Left cardiac atrium (tissue), 4 donors: ENCODE measurements at regions of chr2 and their contacts with region 1.

Region 1: GRCh38 chr2:168346725-168347477 is 99.5 kb upstream of the STK39 start:
- DNase-seq: peak; percentile 70
- ATAC-seq: peak; percentile 79 to 84

Region 2: GRCh38 chr2:168434146-168434545 is 87.2 kb after region 1 on chr2:
- intact Hi-C with region 1: loop called in 1 of 2 experiments (anchors 10 kb)
- DNase-seq: peak; percentile 33
- ATAC-seq: no peak

Region 3: DNA sequence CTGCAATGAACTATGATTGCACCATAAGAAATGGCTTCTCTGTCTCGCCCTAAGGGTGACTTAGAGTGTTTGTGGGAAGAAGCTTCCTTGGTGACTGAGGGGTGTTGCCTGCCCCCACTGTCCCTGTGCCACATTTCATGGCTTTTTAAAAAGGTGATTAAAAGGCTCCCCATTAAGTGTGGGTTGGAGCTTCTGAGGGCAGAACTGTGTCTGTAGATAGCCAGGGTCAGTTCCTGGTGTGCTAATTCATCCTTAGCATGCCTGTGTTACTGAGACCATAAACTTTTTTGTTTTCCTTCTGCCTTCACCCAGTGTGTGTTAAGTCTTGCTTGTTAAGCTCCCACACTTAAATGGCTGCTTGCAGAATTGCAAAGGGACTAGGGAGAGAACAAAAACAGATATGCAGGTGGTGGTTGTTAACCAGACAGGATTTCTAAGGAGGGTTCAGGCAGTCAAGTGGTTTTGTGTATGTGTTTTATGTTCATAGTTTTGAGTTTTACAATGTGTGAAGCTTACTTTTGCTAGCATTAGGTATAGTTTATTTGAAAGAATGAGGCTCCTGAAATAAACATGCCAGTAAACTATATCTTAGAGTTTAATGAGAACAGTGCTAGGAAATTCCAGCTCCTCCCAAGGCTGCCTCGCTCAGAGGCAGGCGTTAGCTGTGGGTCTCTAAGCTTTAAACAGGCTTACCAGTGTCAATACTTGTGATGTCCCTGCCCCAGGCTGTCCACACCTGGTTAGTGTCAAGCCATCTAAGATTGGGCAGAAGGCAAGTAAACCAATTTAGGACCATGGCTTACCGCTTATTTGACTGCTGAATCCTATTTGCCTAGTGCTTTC is 123.6 kb after region 1 on chr2:
- intact Hi-C with region 1: no loop called
- DNase-seq: no peak
- ATAC-seq: peak in 1 of 2 donors; percentile 36

Region 4: DNA sequence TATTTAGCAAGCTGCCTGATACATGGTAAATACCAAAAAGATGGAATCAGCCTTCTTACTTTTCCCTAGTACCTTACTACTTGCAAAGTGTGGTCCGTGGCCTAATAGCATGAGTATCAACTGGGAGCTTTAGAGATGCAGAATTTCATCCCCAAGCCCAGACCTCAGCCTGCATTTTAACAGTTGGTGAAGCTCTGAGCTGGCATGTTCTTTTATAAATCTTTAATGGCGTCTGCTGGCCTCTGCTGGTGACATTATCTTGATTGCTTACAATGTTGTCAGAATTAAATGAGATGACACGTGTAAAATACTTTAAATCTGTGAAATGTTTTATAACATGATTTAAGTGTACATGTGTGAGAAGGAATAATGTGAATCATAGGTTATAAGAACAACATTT is 340.4 kb after region 1 on chr2:
- intact Hi-C with region 1: loop called in 1 of 2 experiments (anchors 5 kb)
- DNase-seq: no peak
- ATAC-seq: peak; percentile 23 to 59

Region 5: GRCh38 chr2:168758970-168759820 is 412.3 kb after region 1 on chr2:
- intact Hi-C with region 1: loop called in 1 of 2 experiments (anchors 2 kb)
- DNase-seq: no peak
- ATAC-seq: peak; percentile 85 to 89

Region 6: DNA sequence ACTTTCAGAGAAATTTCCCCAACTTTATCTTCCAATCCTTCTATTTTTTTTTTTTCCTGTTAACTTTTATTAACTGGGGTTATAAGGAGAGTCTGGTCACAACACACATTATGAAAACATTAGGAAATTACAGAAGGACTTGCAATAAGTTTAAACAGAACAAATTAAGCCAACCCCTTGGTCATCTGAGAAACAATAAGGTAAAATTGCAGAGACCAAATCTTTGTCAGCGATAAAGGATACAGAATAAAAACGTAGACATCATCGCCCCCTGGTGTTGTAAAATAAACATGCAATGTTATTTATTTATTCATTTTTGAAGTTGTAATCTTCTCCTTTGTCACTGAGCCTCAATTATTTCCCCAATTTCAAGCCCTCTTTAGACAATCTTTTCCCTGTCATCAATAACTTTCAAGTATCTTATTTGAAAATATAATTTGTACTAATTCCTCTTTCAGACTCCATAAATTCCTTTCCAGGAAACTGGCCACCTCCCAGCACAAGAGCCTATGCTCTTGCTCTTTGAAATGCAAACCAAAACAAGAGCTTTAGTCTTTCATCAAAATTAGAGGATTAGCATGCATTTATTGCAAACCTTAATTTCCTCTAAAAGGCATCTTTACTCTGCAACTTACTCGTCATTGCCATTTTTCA is 573.7 kb after region 1 on chr2:
- intact Hi-C with region 1: loop called in 1 of 2 experiments (anchors 1 kb)
- DNase-seq: no peak
- ATAC-seq: no peak